ENCODE measurements at regions of chr1 and their contacts with region 1.

Region 1: DNA sequence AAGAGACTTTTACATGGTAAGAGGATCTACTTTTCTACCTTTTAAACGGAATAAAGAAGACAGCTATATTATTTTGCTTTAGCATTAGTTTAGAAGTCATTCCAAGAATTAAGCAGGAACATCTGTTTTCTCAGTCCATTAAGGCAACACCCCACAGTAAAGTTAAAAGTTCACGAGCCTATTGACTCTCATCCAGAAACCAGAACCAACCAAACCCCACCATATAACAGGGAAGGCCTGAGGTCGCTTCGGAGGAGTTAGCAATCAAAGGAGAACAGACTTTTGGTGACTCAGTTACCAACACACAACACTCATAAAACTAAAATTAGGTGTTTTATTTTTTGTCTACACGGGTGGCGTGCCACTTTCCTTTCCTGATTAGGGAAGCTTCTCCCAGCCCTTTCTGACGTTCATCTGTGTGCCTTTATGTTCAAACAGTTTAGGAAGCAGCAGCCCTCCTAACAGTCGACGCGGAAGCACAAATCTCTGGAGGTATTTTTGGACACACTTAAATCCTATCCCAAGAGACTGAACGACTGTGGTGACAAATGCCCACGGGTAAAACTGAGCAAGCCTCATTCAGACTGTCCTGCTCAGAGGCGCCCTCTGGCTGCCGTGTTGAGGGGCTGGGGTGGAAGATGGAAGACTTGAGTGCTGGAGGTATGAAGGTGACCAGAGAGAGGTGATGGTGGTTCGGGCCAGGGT is 8.6 kb upstream of the PLA2G2C start:
- DNase-seq: peak; percentile 10
- H3K4me3 ChIP-seq: no peak overlapping the region
- H3K27ac ChIP-seq: no peak overlapping the region
- H3K27me3 ChIP-seq: peaks cover 38% of the 10 kb centered on the region
- CTCF ChIP-seq: peak; percentile 90

Region 2: DNA sequence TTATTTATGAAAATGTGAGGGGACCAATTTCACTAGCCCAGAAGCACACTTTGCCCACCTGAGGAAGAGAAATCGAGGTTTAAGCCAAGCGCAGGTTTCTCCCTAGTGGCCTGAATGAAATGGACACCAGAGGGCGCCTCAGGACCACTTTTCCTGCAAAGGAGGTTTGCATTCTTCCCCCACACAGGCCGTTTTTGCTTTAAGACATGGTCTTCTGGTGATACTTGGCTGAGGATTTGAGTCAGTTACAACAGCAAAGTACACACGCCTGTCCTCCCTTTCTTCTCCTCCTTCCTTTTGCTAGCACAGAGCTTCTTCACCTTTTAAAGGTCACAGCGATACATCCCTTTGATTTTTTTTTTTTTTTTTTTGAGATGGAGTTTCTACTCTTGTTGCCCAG is 276.9 kb before region 1 on chr1:
- CTCF ChIA-PET with region 1: interaction called, 65 read pairs
- POLR2A ChIA-PET with region 1: no interaction called
- DNase-seq: peak; percentile 60
- H3K4me3 ChIP-seq: no peak overlapping the region
- H3K27ac ChIP-seq: no peak overlapping the region
- H3K27me3 ChIP-seq: peaks cover 11% of the 10 kb centered on the region
- CTCF ChIP-seq: peak; percentile 96

Region 3: GRCh38 chr1:19974822-19975416 is 220.0 kb before region 1 on chr1:
- CTCF ChIA-PET with region 1: interaction called, 18 read pairs
- POLR2A ChIA-PET with region 1: no interaction called
- DNase-seq: peak; percentile 42
- H3K4me3 ChIP-seq: no peak overlapping the region; the same call in 1 of the 2 replicates
- H3K27ac ChIP-seq: no peak overlapping the region
- H3K27me3 ChIP-seq: peaks cover 16% of the 10 kb centered on the region
- CTCF ChIP-seq: peak; percentile 99

Region 4: DNA sequence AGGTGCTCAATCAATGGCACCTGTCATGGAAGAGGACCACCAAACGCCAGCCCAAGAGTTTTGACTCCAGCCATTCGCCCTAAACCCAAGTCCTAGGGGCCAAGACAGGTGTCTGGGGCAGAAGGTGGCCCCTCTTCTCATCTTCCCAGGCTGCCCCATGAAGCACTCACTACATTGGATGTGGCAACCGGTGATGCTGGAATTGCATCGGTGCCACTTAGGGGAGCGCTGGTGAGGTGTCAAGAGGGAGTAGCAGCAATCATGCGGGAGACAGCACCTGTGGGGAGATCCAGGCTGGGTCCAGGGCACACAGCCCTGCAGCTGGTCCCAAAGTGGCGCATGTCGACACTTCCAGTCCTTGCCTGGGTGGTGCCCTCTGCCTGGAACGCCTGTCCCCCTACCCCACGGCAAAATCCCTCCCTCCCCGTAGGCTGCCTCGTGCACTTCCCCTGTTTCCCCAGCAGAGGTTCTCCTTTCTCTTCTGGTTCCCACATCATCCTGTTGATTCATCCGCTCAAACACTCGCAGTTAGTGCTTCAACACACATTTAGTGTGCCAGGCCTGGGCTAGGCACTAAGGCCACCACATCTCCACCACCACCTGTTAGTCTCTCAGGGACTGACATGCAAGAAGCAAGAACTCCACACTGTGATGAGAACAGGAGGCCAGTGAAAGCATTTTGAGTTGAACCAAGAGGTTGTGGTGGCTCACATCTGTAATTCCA is 94.1 kb before region 1 on chr1:
- CTCF ChIA-PET with region 1: interaction called, 18 read pairs
- POLR2A ChIA-PET with region 1: no interaction called
- DNase-seq: peak; percentile 11
- H3K4me3 ChIP-seq: no peak overlapping the region
- H3K27ac ChIP-seq: no peak overlapping the region
- H3K27me3 ChIP-seq: peaks cover 17% of the 10 kb centered on the region
- CTCF ChIP-seq: peak; percentile 78

Region 5: GRCh38 chr1:20110679-20111078 is 84.2 kb before region 1 on chr1:
- CTCF ChIA-PET with region 1: interaction called, 10 read pairs
- POLR2A ChIA-PET with region 1: no interaction called
- DNase-seq: peak; percentile 10
- H3K4me3 ChIP-seq: no peak overlapping the region
- H3K27ac ChIP-seq: no peak overlapping the region
- H3K27me3 ChIP-seq: peaks cover 25% of the 10 kb centered on the region
- CTCF ChIP-seq: no peak

Region 6: DNA sequence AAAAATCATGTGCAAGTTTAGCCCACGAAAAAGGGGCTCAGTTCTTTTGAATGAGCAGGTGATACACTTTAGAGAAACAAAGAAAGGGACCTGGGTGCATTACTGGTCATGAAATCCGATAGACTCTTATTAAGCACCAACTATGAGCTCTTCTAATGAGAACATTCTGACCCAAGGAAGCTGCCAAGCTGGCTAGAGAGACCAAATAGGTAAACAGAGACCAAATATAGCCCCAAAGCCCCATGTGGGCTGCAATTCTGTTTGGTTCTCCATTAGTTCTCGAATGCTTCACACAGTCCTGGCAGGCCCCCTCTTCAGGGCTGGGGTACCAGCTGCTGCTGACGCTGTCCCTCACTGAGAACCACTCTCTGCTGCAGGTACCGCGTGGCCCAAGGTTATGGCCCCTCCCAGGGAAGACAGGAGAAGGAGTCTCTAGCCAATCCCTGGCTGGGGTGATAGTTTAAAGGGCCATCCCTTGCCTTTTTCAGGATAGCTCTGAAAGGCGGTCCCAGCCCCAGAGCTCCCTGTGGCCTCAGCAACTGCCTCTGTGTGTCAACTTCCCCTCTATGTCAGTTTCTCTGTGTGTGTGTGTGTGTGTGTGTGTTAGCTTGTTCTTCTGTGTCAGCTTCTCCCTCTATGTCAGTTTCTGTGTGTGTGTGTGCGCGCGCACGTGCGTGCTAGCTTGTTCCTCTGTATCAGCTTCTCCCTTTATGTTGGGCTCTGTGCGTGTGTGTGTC is 16.1 kb before region 1 on chr1:
- CTCF ChIA-PET with region 1: interaction called, 14 read pairs
- POLR2A ChIA-PET with region 1: no interaction called
- DNase-seq: no peak
- H3K4me3 ChIP-seq: no peak overlapping the region
- H3K27ac ChIP-seq: no peak overlapping the region
- H3K27me3 ChIP-seq: peaks cover 23% of the 10 kb centered on the region
- CTCF ChIP-seq: no peak

Region 7: DNA sequence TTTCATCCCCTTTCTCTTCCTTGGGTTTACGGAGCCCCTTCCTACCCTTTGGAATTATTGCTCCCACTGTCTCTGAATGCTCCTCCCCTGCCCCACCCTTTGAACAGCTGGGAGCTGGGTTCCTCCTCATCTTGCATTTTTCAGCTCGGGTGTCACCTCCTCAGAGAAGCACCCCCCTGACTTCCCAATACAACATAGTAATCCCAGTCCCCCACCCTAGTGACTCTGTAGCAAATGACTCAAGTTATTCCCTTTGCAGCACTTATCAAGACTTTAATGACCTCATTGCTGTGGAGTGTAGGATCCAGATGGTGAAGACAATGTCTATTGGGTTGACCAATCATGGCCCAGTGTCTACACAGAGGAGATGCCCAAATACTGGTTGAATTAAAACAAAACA is 86.9 kb after region 1 on chr1:
- CTCF ChIA-PET with region 1: no interaction called
- POLR2A ChIA-PET with region 1: no interaction called
- DNase-seq: no peak
- H3K4me3 ChIP-seq: no peak overlapping the region
- H3K27ac ChIP-seq: no peak overlapping the region
- H3K27me3 ChIP-seq: peaks cover 12% of the 10 kb centered on the region
- CTCF ChIP-seq: no peak

Region 8: GRCh38 chr1:21703318-21703963 is 1508.5 kb after region 1 on chr1:
- CTCF ChIA-PET with region 1: no interaction called
- POLR2A ChIA-PET with region 1: no interaction called
- DNase-seq: peak; percentile 21
- H3K4me3 ChIP-seq: no peak overlapping the region
- H3K27ac ChIP-seq: peak overlapping the region; percentile 42
- H3K27me3 ChIP-seq: no peaks in the 10 kb centered on the region
- CTCF ChIP-seq: peak; percentile 57